ENCODE measurements at regions of chr6 and their contacts with region 1.

Region 1: DNA sequence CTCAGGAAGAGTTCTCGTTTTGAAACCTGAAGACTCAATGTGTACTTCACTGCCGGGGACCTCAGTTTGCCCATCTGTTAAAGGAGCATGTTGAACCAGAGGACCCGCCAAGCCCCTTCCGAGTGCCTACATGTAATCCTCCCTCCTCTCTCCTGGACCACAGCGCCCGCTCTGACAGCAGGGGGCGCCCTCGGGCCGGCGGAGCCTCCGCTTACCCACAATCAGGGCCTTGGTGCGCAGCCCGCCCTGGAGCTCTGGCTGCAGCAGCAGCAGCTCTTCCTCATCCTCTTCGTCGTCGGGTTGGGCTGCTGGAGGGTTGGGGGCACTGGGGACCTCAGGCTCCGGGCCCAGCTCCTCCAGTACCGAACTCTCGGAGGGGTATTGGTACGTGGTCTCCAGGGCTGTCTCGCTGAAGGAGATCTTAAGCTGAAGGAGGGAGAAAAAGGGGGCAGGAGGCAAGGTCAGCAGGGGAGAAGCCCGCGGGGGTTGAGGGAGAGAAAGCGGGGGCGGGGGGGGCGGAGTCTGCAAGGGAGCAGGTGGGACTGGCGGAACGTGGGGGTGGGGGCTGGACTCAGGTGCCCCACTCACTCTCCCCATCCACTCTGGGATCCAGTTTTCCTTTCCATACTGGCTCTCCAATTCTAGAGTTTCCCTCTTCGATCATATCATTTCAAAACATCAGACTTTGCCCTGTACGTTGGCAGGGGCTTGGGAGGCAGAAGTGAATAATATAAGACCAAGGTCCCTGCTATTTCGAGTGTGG is 6.3 kb upstream of the DHX16 start:
- DNase-seq: peak; percentile 67
- H3K4me3 ChIP-seq: peak overlapping the region in 2 of 3 experiments; percentile 22 to 27
- H3K27ac ChIP-seq: no peak overlapping the region
- H3K4me1 ChIP-seq: peaks cover 36% of the 10 kb centered on the region
- H3K27me3 ChIP-seq: no peaks in the 10 kb centered on the region
- CTCF ChIP-seq: peak; percentile 85 to 98

Region 2: DNA sequence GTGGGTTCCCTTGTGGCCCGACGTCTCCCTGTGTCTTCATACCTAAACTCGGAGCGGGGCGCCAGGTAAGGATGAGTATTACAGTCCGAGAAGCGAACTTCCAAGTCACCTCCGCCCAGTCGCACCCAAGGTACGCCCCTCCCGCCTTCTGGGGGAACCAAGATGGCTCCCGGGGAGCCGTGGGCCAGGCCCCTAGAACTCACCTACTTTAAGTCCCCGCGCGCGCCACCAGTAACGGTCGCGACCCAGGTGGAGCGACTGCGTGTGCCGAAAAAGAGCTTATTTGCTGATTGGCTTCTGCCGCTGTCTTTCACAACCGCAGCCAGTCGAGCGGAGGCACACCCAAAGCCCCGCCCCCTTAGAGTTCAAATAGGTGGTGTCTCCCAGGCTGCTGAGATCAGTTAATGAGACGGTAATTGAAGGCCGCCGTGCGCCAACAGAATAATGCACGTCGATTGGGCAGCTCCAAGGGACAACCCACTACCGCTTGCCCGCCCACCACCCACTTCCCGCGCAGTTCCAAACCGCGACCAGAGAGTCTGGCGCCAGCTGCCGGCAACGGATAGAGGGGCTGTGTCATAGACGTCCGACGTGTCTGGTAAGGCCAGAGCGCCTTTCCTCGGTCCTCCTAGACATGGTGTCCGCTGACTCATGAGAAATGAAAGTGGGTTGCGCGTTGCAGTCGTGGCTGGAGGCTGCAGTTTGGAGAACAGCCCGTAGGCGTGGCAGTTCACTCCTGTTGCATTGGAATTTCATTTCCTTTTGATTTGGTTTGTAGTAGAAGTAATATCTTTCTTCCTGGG is 38.1 kb after region 1 on chr6 and contains the start of gene MDC1:
- CTCF ChIA-PET with region 1: interaction called, 3 read pairs
- dilution Hi-C with region 1: no loop called
- in situ Hi-C with region 1: loop called (anchors 5 kb)
- intact Hi-C with region 1: loop called (anchors 1 kb)
- DNase-seq: peak; percentile 100
- H3K4me3 ChIP-seq: peak within 1 kb of the TSS; percentile 56 to 69 (median 61)
- H3K27ac ChIP-seq: peak within 1 kb of the TSS; percentile 78
- H3K4me1 ChIP-seq: peaks cover 33% of the 10 kb centered on the region
- H3K27me3 ChIP-seq: no peaks in the 10 kb centered on the region
- CTCF ChIP-seq: peak in 1 of 2 donors; percentile 43
- total RNA-seq, gene MDC1: 12.8 to 36.7 TPM

Region 3: GRCh38 chr6:30769088-30769852 is 90.1 kb after region 1 on chr6:
- CTCF ChIA-PET with region 1: no interaction called
- dilution Hi-C with region 1: no loop called
- in situ Hi-C with region 1: no loop called
- intact Hi-C with region 1: loop called (anchors 1 kb)
- DNase-seq: peak; percentile 95
- H3K4me3 ChIP-seq: peak overlapping the region in 1 of 3 experiments; percentile 22
- H3K27ac ChIP-seq: peak overlapping the region; percentile 97
- H3K4me1 ChIP-seq: peaks cover 31% of the 10 kb centered on the region
- H3K27me3 ChIP-seq: no peaks in the 10 kb centered on the region
- CTCF ChIP-seq: no peak

Region 4: GRCh38 chr6:30814136-30815040 is 135.2 kb after region 1 on chr6:
- CTCF ChIA-PET with region 1: no interaction called
- dilution Hi-C with region 1: no loop called
- in situ Hi-C with region 1: no loop called
- intact Hi-C with region 1: loop called (anchors 2 kb)
- DNase-seq: peak; percentile 88
- H3K4me3 ChIP-seq: no peak overlapping the region
- H3K27ac ChIP-seq: peak overlapping the region; percentile 72
- H3K4me1 ChIP-seq: peaks cover 51% of the 10 kb centered on the region
- H3K27me3 ChIP-seq: no peaks in the 10 kb centered on the region
- CTCF ChIP-seq: no peak

Region 5: GRCh38 chr6:31087494-31088089 is 408.4 kb after region 1 on chr6:
- CTCF ChIA-PET with region 1: no interaction called
- dilution Hi-C with region 1: no loop called
- in situ Hi-C with region 1: no loop called
- intact Hi-C with region 1: loop called (anchors 5 kb)
- DNase-seq: peak; percentile 73
- H3K4me3 ChIP-seq: no peak overlapping the region
- H3K27ac ChIP-seq: no peak overlapping the region
- H3K4me1 ChIP-seq: peaks cover 8% of the 10 kb centered on the region
- H3K27me3 ChIP-seq: no peaks in the 10 kb centered on the region
- CTCF ChIP-seq: peak; percentile 74

Measured in mammary epithelial cell (primary cell).